ENCODE measurements at regions of chr1 and their contacts with region 1.

Region 1: GRCh38 chr1:84690397-84691121 is at the start of gene SSX2IP:
- DNase-seq: peak; percentile 98 to 100 (median 99)
- H3K4me3 ChIP-seq: peak within 1 kb of the TSS; percentile 28 to 79
- H3K4me3 Mint-ChIP-seq: peak within 1 kb of the TSS; percentile 87 to 96 (median 92)
- H3K27ac ChIP-seq: peak within 1 kb of the TSS; percentile 87
- H3K27ac Mint-ChIP-seq: peak within 1 kb of the TSS; percentile 90 to 99 (median 97)
- H3K4me1 ChIP-seq: peaks cover 37% of the 10 kb centered on the region
- H3K4me1 Mint-ChIP-seq: peaks cover 45 to 69% (median 45%) of the 10 kb centered on the region in 4 donors
- H3K27me3 ChIP-seq: no peaks in the 10 kb centered on the region
- H3K27me3 Mint-ChIP-seq: no peaks in the 10 kb centered on the region
- total RNA-seq, gene SSX2IP: 7.5 to 8.3 TPM

Region 2: DNA sequence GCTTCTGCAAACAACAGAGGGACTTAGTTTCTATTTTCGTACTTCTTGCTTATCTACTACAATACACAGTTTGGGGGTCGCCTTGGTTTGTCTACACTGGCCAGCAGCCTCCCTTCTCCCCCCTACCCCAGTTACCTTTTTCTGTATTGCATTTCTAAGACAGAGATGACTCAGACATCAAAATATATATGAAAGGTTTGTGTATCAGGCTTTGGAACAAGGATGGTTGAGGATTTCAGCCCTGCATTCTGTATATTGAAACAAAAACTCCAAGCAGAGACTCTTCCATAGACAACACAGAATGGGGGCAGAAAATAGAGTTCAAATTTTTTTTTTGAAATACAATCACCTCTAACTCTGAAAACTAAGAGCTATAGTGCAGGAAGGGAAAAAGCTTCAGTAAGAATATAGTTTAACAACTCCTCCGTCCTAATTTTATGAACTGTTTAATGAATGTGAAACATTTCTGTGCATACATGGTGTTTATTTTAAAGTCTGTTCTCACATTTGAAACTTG is 387.2 kb before region 1 on chr1:
- CTCF ChIA-PET with region 1: no interaction called
- POLR2A ChIA-PET with region 1: no interaction called
- intact Hi-C with region 1: no loop called
- DNase-seq: no peak
- H3K4me3 ChIP-seq: no peak overlapping the region
- H3K4me3 Mint-ChIP-seq: peak overlapping the region in 7 of 8 donors; percentile 2 to 60 (median 19)
- H3K27ac ChIP-seq: no peak overlapping the region
- H3K27ac Mint-ChIP-seq: no peak overlapping the region
- H3K4me1 ChIP-seq: peaks cover 29% of the 10 kb centered on the region
- H3K4me1 Mint-ChIP-seq: peaks cover 9 to 33% (median 25%) of the 10 kb centered on the region in 4 donors
- H3K27me3 ChIP-seq: peaks cover 3% of the 10 kb centered on the region
- H3K27me3 Mint-ChIP-seq: peaks cover 7 to 22% of the 10 kb centered on the region in 2 donors

Region 3: DNA sequence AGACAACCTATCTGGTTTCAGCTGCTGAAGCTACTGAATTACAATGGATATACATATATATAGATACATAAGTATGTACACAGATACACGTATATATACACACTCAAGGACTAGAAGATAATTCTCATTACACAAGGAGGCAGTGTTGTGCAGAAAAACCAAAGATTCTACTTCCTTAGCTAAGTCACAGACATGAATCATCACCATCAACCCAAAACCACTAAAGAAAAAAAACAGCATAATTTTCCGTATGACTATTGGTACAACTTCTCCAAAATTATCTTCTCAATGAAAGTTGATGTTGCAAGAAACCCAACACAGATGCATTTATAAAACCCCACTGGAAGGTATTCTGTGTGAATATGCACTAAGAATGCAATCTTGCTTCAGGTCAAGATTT is 248.3 kb before region 1 on chr1:
- CTCF ChIA-PET with region 1: no interaction called
- POLR2A ChIA-PET with region 1: interaction called, 9 read pairs
- intact Hi-C with region 1: loop called (anchors 1 kb)
- DNase-seq: peak; percentile 47 to 78 (median 72)
- H3K4me3 ChIP-seq: no peak overlapping the region
- H3K4me3 Mint-ChIP-seq: peak overlapping the region in 6 of 8 donors; percentile 37 to 68 (median 48)
- H3K27ac ChIP-seq: no peak overlapping the region
- H3K27ac Mint-ChIP-seq: peak overlapping the region in 6 of 7 donors; percentile 10 to 87 (median 62)
- H3K4me1 ChIP-seq: peaks cover 15% of the 10 kb centered on the region
- H3K4me1 Mint-ChIP-seq: peaks cover 12 to 22% (median 17%) of the 10 kb centered on the region in 4 donors
- H3K27me3 ChIP-seq: no peaks in the 10 kb centered on the region
- H3K27me3 Mint-ChIP-seq: peaks cover 4 to 9% of the 10 kb centered on the region in 2 donors

Region 4: DNA sequence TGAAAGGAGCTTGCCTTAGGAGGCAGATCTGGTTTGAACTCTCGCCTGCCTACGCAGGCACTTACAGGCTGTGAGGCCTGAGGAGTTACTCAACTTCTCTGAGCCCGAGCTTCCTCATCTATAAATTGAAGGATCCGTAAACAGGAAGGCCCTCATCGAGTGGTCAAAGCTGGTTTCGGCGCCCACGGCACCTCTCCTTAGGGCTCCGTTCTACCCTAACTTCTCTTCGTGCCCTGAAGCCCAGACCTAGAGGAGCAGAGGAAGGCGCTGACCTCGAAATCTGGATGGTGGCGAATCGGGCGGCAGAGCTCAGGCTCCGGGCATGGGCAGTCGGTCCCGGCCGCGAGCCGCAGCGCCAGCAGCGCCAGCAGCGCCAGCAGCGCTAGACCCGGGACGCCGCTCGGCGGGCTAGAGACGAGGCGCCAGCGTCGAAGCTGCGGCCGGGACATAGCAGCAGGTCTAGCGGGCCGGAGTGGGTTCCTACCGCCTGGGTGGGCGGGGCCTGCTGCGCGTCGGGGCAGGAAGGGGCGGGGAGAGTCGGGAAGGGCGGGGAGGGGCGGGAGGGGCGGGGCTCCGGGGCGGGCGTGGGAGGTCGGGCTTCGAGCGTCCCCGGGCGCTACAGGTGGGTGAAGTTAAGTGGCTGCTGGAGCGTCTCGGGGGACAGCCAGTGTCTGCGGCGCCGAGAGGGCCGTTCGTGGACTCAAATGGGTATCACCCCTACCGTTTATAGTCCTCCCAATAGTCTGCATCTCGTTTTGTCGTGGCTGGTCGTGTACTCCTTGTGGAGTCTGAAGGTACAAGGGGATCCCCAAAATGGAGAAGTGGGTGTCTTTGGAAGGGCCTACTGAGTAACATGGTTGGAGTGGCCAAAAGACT is 116.4 kb before region 1 on chr1 and contains the start of gene CTBS:
- CTCF ChIA-PET with region 1: no interaction called
- POLR2A ChIA-PET with region 1: interaction called, 12 read pairs
- intact Hi-C with region 1: loop called (anchors 1 kb)
- DNase-seq: peak; percentile 80 to 84 (median 83)
- H3K4me3 ChIP-seq: peak within 1 kb of the TSS; percentile 78 to 97
- H3K4me3 Mint-ChIP-seq: peak within 1 kb of the TSS; percentile 96 to 99 (median 98)
- H3K27ac ChIP-seq: peak within 1 kb of the TSS; percentile 98
- H3K27ac Mint-ChIP-seq: peak within 1 kb of the TSS; percentile 99 to 100 (median 100)
- H3K4me1 ChIP-seq: peaks cover 37% of the 10 kb centered on the region
- H3K4me1 Mint-ChIP-seq: peaks cover 29 to 46% (median 39%) of the 10 kb centered on the region in 4 donors
- H3K27me3 ChIP-seq: no peaks in the 10 kb centered on the region
- H3K27me3 Mint-ChIP-seq: no peaks in the 10 kb centered on the region
- total RNA-seq, gene CTBS: 17.4 to 18.2 TPM

Region 5: GRCh38 chr1:84675105-84675504 is 15.5 kb before region 1 on chr1:
- CTCF ChIA-PET with region 1: interaction called, 10 read pairs
- POLR2A ChIA-PET with region 1: interaction called, 4 read pairs
- intact Hi-C with region 1: no loop called
- DNase-seq: no peak
- H3K4me3 ChIP-seq: no peak overlapping the region
- H3K4me3 Mint-ChIP-seq: no peak overlapping the region
- H3K27ac ChIP-seq: no peak overlapping the region
- H3K27ac Mint-ChIP-seq: no peak overlapping the region
- H3K4me1 ChIP-seq: no peaks in the 10 kb centered on the region
- H3K4me1 Mint-ChIP-seq: peaks cover 4 to 16% (median 7%) of the 10 kb centered on the region in 4 donors
- H3K27me3 ChIP-seq: no peaks in the 10 kb centered on the region
- H3K27me3 Mint-ChIP-seq: no peaks in the 10 kb centered on the region

Region 6: DNA sequence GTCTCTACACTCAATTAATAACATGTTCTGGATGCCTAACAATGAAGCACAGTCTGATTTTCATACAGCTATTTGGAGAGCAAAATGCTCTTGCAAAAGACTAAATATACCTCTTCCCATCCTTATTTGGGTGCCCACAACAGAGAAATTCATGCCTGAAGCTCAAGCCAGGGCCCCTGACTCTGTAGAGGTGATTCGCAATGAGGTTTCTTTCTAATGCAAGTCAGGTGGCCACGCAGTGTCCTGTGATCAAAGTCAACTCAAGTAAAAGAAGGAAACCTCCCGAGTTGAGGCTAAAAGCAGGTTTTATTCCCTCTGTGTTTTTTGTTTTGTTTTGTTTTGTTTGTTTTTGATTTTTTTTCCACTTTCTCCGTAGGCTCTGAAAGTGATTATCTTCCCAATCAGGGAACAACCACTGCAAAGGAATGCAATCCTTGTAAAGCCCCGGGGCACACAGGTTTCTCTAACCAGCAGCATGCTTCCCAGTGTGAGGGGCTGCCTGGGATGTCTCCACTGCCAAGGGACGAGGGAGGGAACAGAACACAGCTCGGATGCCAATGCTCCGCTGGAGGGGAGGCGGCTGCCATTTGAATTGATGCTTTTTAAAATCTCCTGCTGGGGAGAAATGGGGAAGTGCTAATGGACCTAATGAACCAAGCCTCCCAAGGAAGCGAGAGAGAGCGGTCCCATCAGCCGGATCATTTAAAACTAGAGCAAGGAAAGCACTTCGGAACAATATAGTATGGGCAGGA is 73.5 kb after region 1 on chr1:
- CTCF ChIA-PET with region 1: no interaction called
- POLR2A ChIA-PET with region 1: no interaction called
- intact Hi-C with region 1: no loop called
- DNase-seq: no peak
- H3K4me3 ChIP-seq: no peak overlapping the region
- H3K4me3 Mint-ChIP-seq: no peak overlapping the region
- H3K27ac ChIP-seq: no peak overlapping the region
- H3K27ac Mint-ChIP-seq: no peak overlapping the region
- H3K4me1 ChIP-seq: no peaks in the 10 kb centered on the region
- H3K4me1 Mint-ChIP-seq: peaks cover 0 to 4% (median 2%) of the 10 kb centered on the region in 4 donors
- H3K27me3 ChIP-seq: peaks cover 5% of the 10 kb centered on the region
- H3K27me3 Mint-ChIP-seq: peaks cover 8 to 17% of the 10 kb centered on the region in 2 donors

Region 7: GRCh38 chr1:84973498-84974334 is 283.2 kb after region 1 on chr1:
- CTCF ChIA-PET with region 1: no interaction called
- POLR2A ChIA-PET with region 1: no interaction called
- intact Hi-C with region 1: no loop called
- DNase-seq: peak in 1 of 5 donors; percentile 25
- H3K4me3 ChIP-seq: no peak overlapping the region
- H3K4me3 Mint-ChIP-seq: peak overlapping the region in 3 of 8 donors; percentile 10 to 30 (median 23)
- H3K27ac ChIP-seq: no peak overlapping the region
- H3K27ac Mint-ChIP-seq: peak overlapping the region in 4 of 7 donors; percentile 15 to 82 (median 48)
- H3K4me1 ChIP-seq: peaks cover 24% of the 10 kb centered on the region
- H3K4me1 Mint-ChIP-seq: peaks cover 26 to 47% (median 36%) of the 10 kb centered on the region in 4 donors
- H3K27me3 ChIP-seq: no peaks in the 10 kb centered on the region
- H3K27me3 Mint-ChIP-seq: no peaks in the 10 kb centered on the region

Region 8: DNA sequence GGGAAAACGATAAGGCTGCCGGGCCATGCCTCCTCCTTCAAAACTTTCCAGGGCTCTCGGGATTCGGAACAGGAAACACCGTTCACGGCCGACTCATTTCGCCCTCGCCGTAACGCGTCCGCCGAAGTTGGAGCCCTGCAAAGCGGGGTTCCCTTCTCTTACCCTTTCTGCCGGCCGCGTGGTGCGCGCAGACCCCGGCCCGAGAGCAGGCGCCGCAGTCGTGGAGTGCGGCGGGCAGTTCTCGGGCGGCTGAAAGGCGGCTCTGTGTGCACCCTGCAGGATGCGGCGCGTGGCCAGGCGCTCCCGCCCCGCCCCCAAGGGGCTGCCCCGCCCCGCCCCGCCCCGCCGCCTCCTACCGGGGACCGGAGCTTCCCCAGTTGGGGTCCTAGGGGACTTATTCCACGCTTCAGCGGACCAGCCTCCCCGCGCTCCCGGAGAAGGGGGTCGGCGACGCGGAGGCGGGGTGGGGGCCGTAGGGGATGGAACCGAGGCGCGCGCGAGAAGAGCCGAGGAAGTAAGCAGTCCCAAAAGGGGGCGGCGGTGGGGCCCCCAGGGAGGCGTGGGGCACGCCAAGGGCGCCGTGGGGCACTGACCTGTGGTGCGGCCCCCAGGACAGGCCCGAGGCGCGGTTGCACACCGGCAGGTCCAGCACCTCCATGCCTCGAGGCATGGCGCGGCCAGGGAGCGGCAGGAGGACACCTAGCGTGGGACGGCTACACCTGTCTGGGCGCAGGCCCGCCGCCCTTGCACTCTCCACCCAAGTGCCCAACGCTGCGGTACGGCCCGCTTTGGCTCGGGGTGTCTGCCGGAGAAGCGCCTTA is 306.5 kb after region 1 on chr1 and contains the start of gene MCOLN2:
- CTCF ChIA-PET with region 1: no interaction called
- POLR2A ChIA-PET with region 1: no interaction called
- intact Hi-C with region 1: loop called (anchors 2 kb)
- DNase-seq: peak; percentile 42 to 58 (median 52)
- H3K4me3 ChIP-seq: peak within 1 kb of the TSS; percentile 82 to 86
- H3K4me3 Mint-ChIP-seq: peak within 1 kb of the TSS; percentile 81 to 98 (median 89)
- H3K27ac ChIP-seq: peak within 1 kb of the TSS; percentile 50
- H3K27ac Mint-ChIP-seq: peak within 1 kb of the TSS; percentile 51 to 88 (median 76)
- H3K4me1 ChIP-seq: peaks cover 56% of the 10 kb centered on the region
- H3K4me1 Mint-ChIP-seq: peaks cover 30 to 67% (median 39%) of the 10 kb centered on the region in 4 donors
- H3K27me3 ChIP-seq: peaks cover 4% of the 10 kb centered on the region
- H3K27me3 Mint-ChIP-seq: peaks cover 3 to 17% of the 10 kb centered on the region in 2 donors
- total RNA-seq, gene MCOLN2: 16.8 to 20.3 TPM

Region 9: DNA sequence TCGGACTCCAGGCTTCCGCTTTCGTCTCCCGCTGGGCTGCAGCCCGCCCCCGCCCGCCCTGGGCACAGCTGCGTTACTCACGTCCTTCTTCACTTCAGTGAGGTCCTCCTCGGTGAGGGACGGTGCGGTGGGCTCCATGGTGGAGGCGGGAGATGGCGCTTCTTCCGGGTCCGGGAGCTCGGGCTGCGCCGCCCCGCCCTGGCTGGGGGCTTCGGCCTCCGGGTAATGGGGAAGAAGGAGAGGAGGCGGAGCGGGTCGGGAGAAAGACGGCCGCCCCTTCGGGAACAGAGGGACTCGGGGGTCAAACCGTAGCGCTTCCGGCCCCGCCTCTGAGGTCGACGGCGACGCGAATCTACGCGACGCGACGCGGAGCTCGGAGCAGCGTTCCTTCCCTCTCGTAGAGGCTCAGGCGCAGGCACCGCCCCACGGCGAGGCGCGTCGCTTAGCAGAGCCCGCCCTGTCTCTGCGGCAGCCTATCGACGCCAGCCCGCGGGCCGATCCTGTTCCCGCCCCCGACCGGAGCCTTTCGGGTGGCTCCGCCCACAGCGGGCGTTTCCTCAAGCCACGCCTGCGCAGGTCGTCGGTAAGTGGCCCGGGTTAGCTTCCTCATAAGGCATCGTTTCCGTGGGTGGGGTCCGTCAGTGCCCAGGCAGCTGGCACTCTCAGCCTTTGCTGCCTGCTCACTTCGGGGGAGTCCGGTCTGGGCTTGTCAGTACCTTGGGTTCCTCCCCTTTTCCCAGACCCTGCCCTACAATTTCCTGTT is 585.8 kb after region 1 on chr1 and contains the start of gene BCL10:
- CTCF ChIA-PET with region 1: no interaction called
- POLR2A ChIA-PET with region 1: no interaction called
- intact Hi-C with region 1: loop called (anchors 2 kb)
- DNase-seq: peak; percentile 96 to 98 (median 97)
- H3K4me3 ChIP-seq: peak within 1 kb of the TSS; percentile 75 to 94
- H3K4me3 Mint-ChIP-seq: peak within 1 kb of the TSS; percentile 88 to 93 (median 92)
- H3K27ac ChIP-seq: peak within 1 kb of the TSS; percentile 94
- H3K27ac Mint-ChIP-seq: peak within 1 kb of the TSS; percentile 94 to 97 (median 96)
- H3K4me1 ChIP-seq: peaks cover 55% of the 10 kb centered on the region
- H3K4me1 Mint-ChIP-seq: peaks cover 42 to 62% (median 53%) of the 10 kb centered on the region in 4 donors
- H3K27me3 ChIP-seq: no peaks in the 10 kb centered on the region
- H3K27me3 Mint-ChIP-seq: no peaks in the 10 kb centered on the region
- total RNA-seq, gene BCL10: 36.1 to 37.0 TPM